ENCODE measurements at regions of chr7 and their contacts with region 1.

Region 1: DNA sequence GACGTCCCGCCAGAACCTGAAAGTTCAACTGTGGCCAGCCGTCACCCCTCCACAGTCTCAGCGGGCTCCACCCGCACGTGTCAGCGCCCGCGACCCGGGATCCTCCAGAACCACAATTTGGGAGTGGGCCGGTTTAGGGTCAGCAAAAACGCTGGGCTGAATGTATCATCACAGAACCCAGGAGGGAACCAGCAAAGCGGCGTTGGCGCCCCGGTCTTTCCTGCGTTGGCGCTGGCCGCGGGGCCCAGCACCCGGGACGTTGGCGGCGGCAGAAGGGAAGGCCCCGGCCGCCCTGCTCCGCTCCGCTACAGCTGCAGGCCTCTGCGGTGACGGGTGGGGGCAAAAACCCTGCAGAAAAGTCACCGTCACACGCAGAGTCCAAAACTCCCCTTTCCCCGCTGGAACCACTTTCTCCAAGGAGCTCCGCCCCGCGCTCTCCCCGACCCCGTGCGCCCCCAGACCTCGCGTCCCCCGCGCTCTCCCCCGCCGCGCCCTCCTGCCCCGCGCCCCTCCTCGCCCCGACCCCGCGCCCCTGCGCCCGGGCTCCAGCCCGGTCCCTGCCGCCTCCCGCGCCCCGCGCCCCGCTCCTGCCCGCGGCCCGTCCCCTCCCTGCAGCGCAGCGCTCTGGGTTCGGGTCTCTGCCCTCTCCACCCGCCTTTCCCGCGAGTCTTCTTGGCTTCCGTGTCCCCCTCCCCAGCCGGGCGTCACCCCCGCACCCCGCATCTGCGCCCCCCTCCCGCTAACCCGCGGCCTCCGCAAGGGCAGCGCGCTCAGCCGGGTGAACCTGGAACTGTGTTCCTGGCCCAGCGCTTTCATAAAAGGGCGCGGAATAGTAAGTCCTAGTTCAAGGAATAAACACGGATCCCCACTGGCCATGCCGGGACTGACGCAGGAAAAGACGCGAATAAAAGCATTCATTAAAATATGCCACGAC is 24.0 kb upstream of the RNF32 start:
- DNase-seq: no peak
- H3K4me3 ChIP-seq: no peak overlapping the region
- H3K27ac ChIP-seq: no peak overlapping the region
- H3K4me1 ChIP-seq: no peaks in the 10 kb centered on the region
- H3K27me3 ChIP-seq: peaks cover 21% of the 10 kb centered on the region
- CTCF ChIP-seq: no peak

Region 2: DNA sequence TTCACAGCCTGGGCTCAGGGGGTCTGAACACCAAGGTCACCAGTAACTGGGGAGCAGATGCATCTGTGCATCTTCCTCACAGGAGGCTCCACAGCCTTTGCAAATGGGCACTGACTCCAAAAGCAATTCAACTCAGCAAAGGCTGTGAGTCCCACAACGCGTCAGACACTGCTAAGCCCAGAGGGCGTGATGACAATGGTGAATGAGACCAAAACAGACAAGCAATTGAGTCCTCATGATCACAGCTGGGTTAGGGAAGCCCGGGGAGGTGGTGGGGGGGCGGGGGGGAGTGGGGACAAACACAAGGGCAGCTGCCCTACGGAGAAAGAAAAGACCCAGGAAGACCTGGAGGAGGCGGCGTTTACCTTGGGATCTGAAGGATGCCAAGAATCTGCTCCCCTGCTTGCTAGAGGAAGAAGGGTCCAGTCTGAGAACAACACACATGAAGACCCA is 37.5 kb before region 1 on chr7:
- dilution Hi-C with region 1: loop called (anchors 5 kb)
- DNase-seq: no peak
- H3K4me3 ChIP-seq: no peak overlapping the region
- H3K27ac ChIP-seq: no peak overlapping the region
- H3K4me1 ChIP-seq: no peaks in the 10 kb centered on the region
- H3K27me3 ChIP-seq: no peaks in the 10 kb centered on the region
- CTCF ChIP-seq: no peak

Measured in keratinocyte (primary cell).